Sigmoid colon (tissue), 7 donors: ENCODE measurements at regions of chr7 and their contacts with region 1.

Region 1: DNA sequence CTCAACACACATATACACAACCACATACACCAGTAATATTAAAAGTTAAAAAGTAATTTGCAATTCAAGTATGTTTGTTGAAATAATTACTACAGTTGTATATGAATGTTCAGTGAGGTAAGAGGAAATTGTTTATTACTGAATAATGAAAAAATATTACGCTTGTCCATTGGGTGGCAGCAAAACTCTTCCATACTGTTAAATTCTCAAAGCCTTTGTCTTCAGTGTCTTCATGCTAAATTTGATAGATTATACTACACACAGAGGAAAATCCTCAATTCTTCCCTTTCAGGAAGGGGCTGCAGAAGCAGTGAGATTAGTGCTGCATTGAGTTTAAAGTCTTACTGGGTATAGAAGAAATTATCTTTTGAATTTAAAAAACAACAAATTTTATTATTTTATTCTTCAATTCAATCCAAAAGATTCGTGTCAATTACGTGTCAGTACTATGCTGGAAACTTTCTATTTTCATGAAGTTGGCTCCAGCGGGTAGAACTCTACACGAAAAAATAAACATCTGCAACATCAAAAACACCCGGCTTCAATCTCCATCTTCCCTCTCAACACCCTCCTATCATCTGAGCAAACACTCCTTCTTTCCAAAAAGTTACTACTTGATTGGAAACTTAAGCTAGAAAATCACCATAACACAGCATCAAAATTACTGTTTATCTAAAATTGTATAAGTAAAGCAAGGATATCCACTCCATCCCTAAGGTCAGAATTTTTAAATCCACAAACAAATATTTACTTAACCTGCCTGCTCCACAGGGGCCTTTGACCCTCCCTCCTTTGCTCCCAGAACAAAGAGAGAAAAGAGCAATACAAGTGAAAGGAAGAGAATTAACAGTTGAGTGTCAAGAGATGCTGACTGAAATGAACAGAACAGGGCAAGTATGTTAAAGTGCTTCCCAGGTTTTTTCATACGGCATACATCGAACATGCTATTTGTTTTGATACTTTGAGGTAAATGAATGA is 37.0 kb upstream of the TES start:
- DNase-seq: no peak
- H3K4me3 ChIP-seq: no peak overlapping the region
- H3K27ac ChIP-seq: peak overlapping the region in 1 of 4 donors; percentile 38
- H3K4me1 ChIP-seq: peaks cover 0 to 14% (median 4%) of the 10 kb centered on the region in 4 donors
- H3K27me3 ChIP-seq: no peaks in the 10 kb centered on the region
- CTCF ChIP-seq: peak; percentile 21 to 52 (median 46)
- EP300 ChIP-seq: no peak
- POLR2A ChIP-seq: no peak

Region 2: GRCh38 chr7:115910541-115911164 is 262.7 kb before region 1 on chr7:
- intact Hi-C with region 1: no loop called
- DNase-seq: no peak
- H3K4me3 ChIP-seq: no peak overlapping the region
- H3K27ac ChIP-seq: no peak overlapping the region
- H3K4me1 ChIP-seq: peaks cover 0 to 8% (median 3%) of the 10 kb centered on the region in 4 donors
- H3K27me3 ChIP-seq: no peaks in the 10 kb centered on the region
- CTCF ChIP-seq: peak; percentile 21 to 53 (median 45)
- EP300 ChIP-seq: no peak
- POLR2A ChIP-seq: no peak

Region 3: GRCh38 chr7:116138202-116138801 is 35.0 kb before region 1 on chr7:
- intact Hi-C with region 1: loop called (anchors 2 kb)
- DNase-seq: no peak
- H3K4me3 ChIP-seq: no peak overlapping the region
- H3K27ac ChIP-seq: peak overlapping the region in 3 of 4 donors; percentile 74 to 78 (median 75)
- H3K4me1 ChIP-seq: peaks cover 0 to 24% (median 12%) of the 10 kb centered on the region in 4 donors
- H3K27me3 ChIP-seq: no peaks in the 10 kb centered on the region
- CTCF ChIP-seq: peak; percentile 41 to 70 (median 68)
- EP300 ChIP-seq: no peak
- POLR2A ChIP-seq: no peak

Region 4: DNA sequence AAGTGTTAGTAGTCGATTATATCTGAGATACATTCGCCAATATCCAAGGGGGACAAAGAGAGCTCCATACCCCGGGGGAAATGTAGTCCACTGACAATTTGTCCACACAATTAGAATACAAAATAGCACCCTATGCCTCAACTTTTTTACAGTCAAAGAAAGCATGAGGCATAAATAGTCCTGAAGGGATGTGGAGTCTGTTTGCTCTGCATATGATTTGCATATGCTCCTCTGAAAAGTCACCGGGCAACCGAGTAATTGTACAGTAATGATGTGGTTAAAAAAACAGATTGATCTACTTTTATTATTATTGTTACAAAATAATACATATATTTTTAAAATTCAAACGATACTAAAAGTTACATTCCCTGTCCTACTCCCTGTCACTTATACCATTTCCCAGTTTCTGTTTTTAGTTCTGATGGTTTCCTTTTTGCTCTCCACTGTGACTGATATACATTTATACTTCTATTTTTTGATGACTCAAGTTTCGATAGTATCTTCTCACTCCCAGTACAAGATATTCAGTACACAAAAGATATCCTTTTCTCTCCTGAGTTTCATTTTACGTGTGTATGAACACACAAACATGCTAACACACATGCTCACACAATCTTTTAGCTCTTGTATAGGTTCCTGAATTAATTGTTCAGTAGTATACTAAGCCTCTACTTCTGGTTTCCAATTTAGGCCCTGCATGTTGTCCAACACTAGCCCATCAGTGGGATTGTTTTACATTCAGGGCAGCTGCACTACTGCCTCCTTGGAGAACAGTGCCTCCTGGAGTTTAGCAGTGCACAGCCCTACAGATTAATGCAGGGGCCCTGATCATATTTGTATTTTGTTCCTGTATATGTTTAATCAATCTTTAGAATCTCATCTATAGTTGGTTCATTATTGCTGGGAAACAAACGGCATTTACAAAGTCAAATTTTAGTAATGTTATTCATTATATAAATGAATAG is 167.9 kb after region 1 on chr7:
- intact Hi-C with region 1: loop called (anchors 10 kb)
- DNase-seq: no peak
- H3K4me3 ChIP-seq: no peak overlapping the region
- H3K27ac ChIP-seq: peak overlapping the region in 3 of 4 donors; percentile 51 to 57 (median 56)
- H3K4me1 ChIP-seq: peaks cover 0 to 46% (median 15%) of the 10 kb centered on the region in 4 donors
- H3K27me3 ChIP-seq: no peaks in the 10 kb centered on the region
- CTCF ChIP-seq: peak in 1 of 4 experiments; percentile 20
- EP300 ChIP-seq: no peak
- POLR2A ChIP-seq: no peak